ENCODE measurements at regions of chr12 and their contacts with region 1.

Region 1: DNA sequence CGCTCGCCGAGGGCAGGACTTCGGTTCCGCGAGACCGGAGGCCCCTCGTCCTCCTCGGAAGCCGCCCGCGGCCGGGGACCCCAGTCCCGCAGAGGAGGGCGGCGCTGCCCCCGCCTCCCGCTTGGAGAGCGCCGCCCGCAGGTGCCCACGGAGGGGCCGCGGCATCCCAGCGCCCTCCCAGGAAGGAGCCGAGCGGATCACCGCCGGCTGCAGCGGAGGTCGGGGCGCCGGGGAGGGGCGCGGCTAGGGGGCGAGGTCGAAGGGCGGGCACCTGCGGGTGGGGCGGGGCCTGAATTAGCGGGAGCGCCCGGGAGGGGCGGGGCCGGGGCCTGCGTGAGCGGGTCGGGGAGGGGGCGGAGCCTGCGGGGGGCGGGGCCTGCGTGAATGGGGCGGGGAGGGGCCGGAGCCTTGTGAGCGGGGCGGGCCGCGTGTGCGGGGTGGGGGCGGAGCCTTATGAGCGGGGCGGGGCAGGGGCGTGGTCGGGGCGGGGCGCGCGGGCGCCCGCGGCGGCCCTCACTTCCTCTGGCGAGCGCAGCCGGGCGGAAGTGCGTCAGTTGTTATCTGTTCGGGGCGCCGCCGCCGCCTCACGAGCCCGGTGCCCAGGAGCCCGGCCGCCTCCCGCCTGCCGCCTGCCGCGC is at the start of gene FBRSL1:
- DNase-seq: peak; percentile 90 to 94 (median 92)
- ATAC-seq: peak; percentile 79
- H3K4me3 ChIP-seq: peak within 1 kb of the TSS; percentile 16 to 63
- H3K27ac ChIP-seq: peak within 1 kb of the TSS; percentile 66 to 90 (median 78)
- H3K4me1 ChIP-seq: peaks cover 41% of the 10 kb centered on the region
- H3K27me3 ChIP-seq: no peaks in the 10 kb centered on the region
- CTCF ChIP-seq: no peak
- POLR2A ChIP-seq: peak in 2 of 3 donors; percentile 13 to 33
- total RNA-seq, gene FBRSL1: 29.8 to 50.1 TPM

Region 2: DNA sequence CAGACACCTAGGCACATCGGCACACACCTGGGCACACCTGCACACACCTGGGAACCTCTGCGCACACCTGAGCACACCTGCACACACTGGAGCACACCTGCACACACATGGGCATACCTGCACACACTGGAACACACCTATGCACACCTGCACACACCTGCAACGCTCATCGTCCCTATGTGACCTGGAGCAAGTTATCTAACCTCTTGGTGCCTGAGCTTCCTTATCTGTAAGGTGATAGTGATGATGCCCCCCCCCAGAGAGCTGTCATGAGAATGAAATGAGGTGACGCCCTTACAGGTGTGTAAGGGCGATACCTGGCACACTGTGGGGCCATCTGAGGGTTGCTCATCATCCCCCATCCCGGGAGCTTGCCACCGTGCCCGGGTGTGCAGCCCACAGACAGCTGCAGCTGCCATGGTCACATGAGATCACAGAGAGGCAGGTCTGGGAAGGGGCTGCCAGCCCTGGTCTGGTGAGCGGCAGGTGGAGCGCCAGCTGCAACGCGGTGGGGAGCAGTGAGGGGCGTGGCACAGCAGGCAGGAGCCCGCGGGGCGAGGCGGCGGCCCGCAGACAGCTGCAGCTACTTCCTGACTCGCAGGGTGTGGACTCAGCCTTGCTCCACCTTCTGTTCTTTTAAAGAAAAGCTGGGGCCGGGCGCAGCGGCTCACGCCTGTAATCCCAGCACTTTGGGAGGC is 59.6 kb before region 1 on chr12:
- intact Hi-C with region 1: loop called (anchors 10 kb)
- DNase-seq: peak; percentile 68 to 89 (median 84)
- ATAC-seq: peak; percentile 12
- H3K4me3 ChIP-seq: no peak overlapping the region
- H3K27ac ChIP-seq: peak overlapping the region; percentile 90 to 98 (median 96)
- H3K4me1 ChIP-seq: peaks cover 71% of the 10 kb centered on the region
- H3K27me3 ChIP-seq: no peaks in the 10 kb centered on the region
- CTCF ChIP-seq: peak in 1 of 7 experiments; percentile 8
- POLR2A ChIP-seq: peak in 1 of 3 donors; percentile 33